HepG2 (cell line): ENCODE measurements at regions of chr4 and their contacts with region 1.

Region 1: GRCh38 chr4:39571054-39571453 is 43.8 kb upstream of the UGDH start:
- DNase-seq: no peak
- ATAC-seq: no peak
- H3K4me3 ChIP-seq: no peak overlapping the region
- H3K27ac ChIP-seq: no peak overlapping the region
- H3K4me1 ChIP-seq: peaks cover 18% of the 10 kb centered on the region
- H3K27me3 ChIP-seq: no peaks in the 10 kb centered on the region
- CTCF ChIP-seq: no peak
- EP300 ChIP-seq: no peak
- POLR2A ChIP-seq: no peak
- RAD21 ChIP-seq: no peak

Region 2: DNA sequence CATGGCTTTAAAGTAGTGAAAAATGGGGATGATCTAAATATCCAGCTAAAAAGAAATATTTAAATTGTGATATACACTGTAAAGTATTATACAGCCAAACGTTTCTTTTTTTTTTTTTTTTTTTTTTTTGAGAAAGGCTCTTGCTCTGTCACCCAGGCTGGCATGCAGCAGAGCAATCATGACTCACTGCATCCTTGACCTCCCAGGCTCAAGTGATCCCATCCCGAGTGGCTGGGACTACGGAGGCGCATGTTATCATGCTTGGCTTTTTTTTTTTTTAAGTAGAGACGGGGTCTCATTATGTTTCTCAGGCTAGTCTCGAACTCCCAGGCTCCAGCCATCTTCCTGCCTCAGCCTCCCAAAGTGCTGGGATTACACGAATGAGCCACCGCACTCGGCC is 50.5 kb after region 1 on chr4:
- CTCF ChIA-PET with region 1: no interaction called
- POLR2A ChIA-PET with region 1: no interaction called
- in situ Hi-C with region 1: no loop called
- intact Hi-C with region 1: loop called (anchors 10 kb)
- DNase-seq: peak; percentile 88
- ATAC-seq: peak; percentile 91
- H3K4me3 ChIP-seq: no peak overlapping the region; a peak in 1 of 6 replicates
- H3K27ac ChIP-seq: peak overlapping the region; percentile 49
- H3K4me1 ChIP-seq: peaks cover 57% of the 10 kb centered on the region
- H3K27me3 ChIP-seq: no peaks in the 10 kb centered on the region
- CTCF ChIP-seq: no peak
- EP300 ChIP-seq: peak in 1 of 2 experiments; percentile 54; a peak in 2 of 4 replicates
- POLR2A ChIP-seq: no peak
- RAD21 ChIP-seq: no peak